ENCODE measurements at regions of chr6 and their contacts with region 1.

Region 1: DNA sequence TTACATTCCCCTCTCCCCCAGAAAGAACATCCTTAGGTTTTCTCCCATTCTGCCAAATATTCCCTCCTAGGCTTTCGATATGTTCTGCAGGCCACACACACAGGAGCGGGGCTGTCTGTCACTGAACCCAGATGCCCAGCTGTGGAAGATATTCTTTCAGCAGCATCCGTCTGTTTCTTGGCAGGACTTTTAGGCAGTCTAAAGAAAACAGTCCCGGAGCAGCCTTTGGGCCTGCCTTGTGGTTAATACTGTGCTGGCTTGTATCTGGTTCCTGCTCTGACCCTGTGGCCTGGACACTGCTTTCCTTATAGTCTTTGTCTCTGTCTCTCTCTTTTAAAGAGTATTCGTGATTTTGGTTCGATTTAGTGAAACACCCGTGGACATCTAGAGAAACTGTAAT is 94.6 kb upstream of the SUPT3H start:
- DNase-seq: no peak
- H3K4me3 ChIP-seq: no peak overlapping the region
- H3K27ac ChIP-seq: no peak overlapping the region
- H3K4me1 ChIP-seq: no peaks in the 10 kb centered on the region
- H3K27me3 ChIP-seq: no peaks in the 10 kb centered on the region
- CTCF ChIP-seq: no peak

Region 2: GRCh38 chr6:45350186-45350710 is 122.1 kb before region 1 on chr6:
- intact Hi-C with region 1: no loop called
- DNase-seq: no peak
- H3K4me3 ChIP-seq: no peak overlapping the region
- H3K27ac ChIP-seq: no peak overlapping the region
- H3K4me1 ChIP-seq: no peaks in the 10 kb centered on the region
- H3K27me3 ChIP-seq: no peaks in the 10 kb centered on the region
- CTCF ChIP-seq: no peak

Region 3: DNA sequence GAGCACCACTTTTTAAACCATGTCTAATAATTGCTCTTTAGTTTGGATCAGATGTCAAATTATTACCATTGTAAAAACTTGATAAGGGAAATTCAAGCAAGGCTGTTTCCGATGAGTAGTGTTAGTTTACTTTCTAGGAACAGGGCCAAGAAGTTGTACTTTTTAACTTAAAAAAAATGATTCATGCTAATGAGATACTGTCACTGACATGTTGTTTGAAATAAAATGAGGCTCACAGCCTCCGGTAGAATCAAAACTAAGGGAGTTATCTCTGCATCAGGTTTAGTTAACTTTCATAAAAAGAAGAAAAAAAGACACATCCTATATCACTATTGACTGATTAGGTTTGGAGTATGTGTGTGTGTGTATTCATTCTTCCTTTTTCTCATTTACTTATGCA is 39.4 kb before region 1 on chr6:
- intact Hi-C with region 1: loop called (anchors 2 kb)
- DNase-seq: no peak
- H3K4me3 ChIP-seq: no peak overlapping the region
- H3K27ac ChIP-seq: no peak overlapping the region
- H3K4me1 ChIP-seq: peaks cover 0 to 17% (median 7%) of the 10 kb centered on the region in 4 donors
- H3K27me3 ChIP-seq: peaks cover 0 to 3% of the 10 kb centered on the region in 2 donors
- CTCF ChIP-seq: no peak

Region 4: DNA sequence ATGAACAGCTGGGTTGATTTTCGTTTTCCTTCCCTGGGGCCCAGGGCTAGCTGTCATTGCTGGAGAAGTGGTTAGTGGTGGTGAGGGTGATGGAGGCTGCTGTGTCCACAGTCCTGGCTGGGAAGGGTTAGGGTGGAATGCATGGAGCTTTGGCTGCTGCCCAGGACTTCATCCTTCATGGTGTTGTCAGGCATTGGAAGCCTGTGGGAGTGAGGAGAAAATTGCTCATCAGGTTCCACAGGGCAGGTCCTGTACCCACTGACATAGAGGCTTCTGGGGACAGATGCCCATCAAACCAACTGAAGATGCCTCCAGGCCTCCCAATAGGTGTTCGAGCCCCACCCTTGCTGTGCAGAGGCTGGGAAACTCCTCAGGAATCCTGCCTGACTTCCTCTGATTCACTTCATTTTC is 167.7 kb after region 1 on chr6:
- intact Hi-C with region 1: no loop called
- DNase-seq: no peak
- H3K4me3 ChIP-seq: no peak overlapping the region
- H3K27ac ChIP-seq: no peak overlapping the region
- H3K4me1 ChIP-seq: no peaks in the 10 kb centered on the region
- H3K27me3 ChIP-seq: peaks cover 0 to 19% of the 10 kb centered on the region in 2 donors
- CTCF ChIP-seq: no peak

Measured in tibial artery (tissue), 4 donors.